Esophagus muscularis mucosa (tissue), 4 donors: ENCODE measurements at regions of chr14 and their contacts with region 1.

Region 1: DNA sequence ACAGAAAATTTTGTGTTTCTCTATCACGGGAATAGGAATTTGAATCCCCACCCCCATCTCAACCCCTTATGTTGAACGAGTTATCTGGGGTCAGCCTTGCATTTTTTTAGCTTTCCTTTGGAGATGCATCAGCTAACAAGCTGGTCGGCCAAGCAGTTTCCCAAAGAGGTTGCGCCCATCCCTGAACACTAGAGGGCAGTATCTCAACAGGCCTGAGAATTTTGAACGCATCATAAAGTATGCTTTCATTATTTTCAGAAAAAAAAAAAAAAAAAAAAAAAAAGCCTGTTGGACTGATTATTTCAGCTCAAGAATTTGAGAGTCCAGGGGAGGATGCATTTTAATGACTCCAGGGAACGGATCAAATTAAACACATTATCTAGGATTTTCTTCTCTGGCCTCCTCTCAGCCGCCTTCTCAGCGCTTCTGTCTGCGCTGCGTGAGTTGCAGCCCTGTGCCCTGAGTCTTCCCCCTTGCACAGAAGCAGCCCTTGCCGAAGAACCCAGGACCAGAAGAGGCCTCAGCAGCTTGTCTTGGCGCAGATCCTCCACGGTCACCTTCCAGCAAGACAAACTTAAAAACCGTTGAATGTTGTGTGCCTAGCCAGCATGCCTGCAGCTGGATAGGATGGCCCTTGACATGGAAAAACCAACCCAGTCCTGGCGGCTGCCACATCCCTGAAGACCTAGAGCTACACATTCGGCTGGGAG is 76.6 kb upstream of the GZMB start:
- DNase-seq: peak; percentile 90
- H3K4me3 ChIP-seq: peak overlapping the region in 3 of 4 donors; percentile 11 to 35 (median 17)
- H3K27ac ChIP-seq: no peak overlapping the region
- H3K4me1 ChIP-seq: peaks cover 0 to 6% (median 0%) of the 10 kb centered on the region in 4 donors
- H3K27me3 ChIP-seq: no peaks in the 10 kb centered on the region
- CTCF ChIP-seq: peak; percentile 66 to 84 (median 73)
- EP300 ChIP-seq: no peak
- POLR2A ChIP-seq: no peak

Region 2: DNA sequence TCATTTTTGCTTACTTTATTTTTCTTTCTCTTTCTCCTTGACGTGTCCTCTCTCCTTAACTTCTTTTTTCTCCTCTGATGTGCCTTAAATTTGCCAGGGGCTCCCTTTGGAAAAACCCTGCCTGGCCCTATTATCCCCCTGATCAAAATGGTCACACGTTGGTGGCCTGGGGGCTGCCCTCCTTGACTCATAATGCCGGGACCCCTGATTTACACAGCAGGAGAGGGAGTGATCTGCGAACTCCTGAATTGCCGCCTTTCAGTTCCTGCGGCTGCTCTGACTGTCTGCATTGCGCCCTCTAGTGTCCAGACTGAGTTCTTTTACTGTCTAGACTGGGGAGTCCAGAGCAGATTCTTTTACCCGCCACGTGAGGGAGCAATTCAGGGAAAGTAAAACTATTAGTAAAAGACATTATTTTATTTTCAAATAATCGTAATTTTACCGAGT is 31.7 kb before region 1 on chr14:
- intact Hi-C with region 1: no loop called
- DNase-seq: no peak
- H3K4me3 ChIP-seq: peak overlapping the region; percentile 35 to 49 (median 40)
- H3K27ac ChIP-seq: no peak overlapping the region
- H3K4me1 ChIP-seq: peaks cover 0 to 35% (median 32%) of the 10 kb centered on the region in 4 donors
- H3K27me3 ChIP-seq: peaks cover 0 to 3% (median 0%) of the 10 kb centered on the region in 4 donors
- CTCF ChIP-seq: peak; percentile 83 to 94 (median 84)
- EP300 ChIP-seq: no peak
- POLR2A ChIP-seq: no peak

Region 3: DNA sequence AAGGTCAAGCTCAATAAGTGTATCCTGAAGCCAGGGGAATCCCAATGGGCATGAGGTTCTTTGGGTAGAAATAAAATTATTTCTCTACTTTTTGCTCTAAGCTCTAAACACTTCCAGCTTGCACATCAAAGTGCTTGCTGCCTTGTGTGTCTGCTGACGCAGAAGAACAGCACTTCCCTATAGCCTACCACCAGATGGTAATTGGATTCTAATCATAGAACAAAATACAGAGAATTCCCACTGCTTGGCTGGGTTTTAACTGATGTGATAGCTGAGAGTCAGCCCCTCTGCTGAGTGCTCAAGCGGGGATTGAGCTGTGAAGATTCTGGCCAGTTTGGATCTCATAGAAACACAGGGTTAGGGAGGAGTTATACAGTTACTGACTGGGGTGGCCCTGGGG is 55.9 kb after region 1 on chr14:
- intact Hi-C with region 1: no loop called
- DNase-seq: no peak
- H3K4me3 ChIP-seq: no peak overlapping the region
- H3K27ac ChIP-seq: no peak overlapping the region
- H3K4me1 ChIP-seq: no peaks in the 10 kb centered on the region
- H3K27me3 ChIP-seq: no peaks in the 10 kb centered on the region
- CTCF ChIP-seq: no peak
- EP300 ChIP-seq: no peak
- POLR2A ChIP-seq: no peak

Region 4: GRCh38 chr14:25150934-25151790 is 440.6 kb after region 1 on chr14:
- intact Hi-C with region 1: loop called (anchors 5 kb)
- DNase-seq: no peak
- H3K4me3 ChIP-seq: no peak overlapping the region
- H3K27ac ChIP-seq: no peak overlapping the region
- H3K4me1 ChIP-seq: no peaks in the 10 kb centered on the region
- H3K27me3 ChIP-seq: no peaks in the 10 kb centered on the region
- CTCF ChIP-seq: peak; percentile 77 to 85 (median 84)
- EP300 ChIP-seq: no peak
- POLR2A ChIP-seq: no peak

Region 5: GRCh38 chr14:25400607-25401206 is 690.1 kb after region 1 on chr14:
- intact Hi-C with region 1: loop called (anchors 10 kb)
- DNase-seq: no peak
- H3K4me3 ChIP-seq: no peak overlapping the region
- H3K27ac ChIP-seq: no peak overlapping the region
- H3K4me1 ChIP-seq: no peaks in the 10 kb centered on the region
- H3K27me3 ChIP-seq: no peaks in the 10 kb centered on the region
- CTCF ChIP-seq: peak; percentile 51 to 78 (median 72)
- EP300 ChIP-seq: no peak
- POLR2A ChIP-seq: no peak